Activated CD4-positive, alpha-beta T cell treated with anti-CD3 and anti-CD28 coated beads for 36 hours (primary cell): ENCODE measurements at regions of chr3 and their contacts with region 1.

Region 1: GRCh38 chr3:120587332-120587975 is 8.7 kb upstream of the NDUFB4 start:
- DNase-seq: no peak
- ATAC-seq: no peak
- H3K4me3 Mint-ChIP-seq: no peak overlapping the region
- H3K27ac Mint-ChIP-seq: no peak overlapping the region
- H3K4me1 Mint-ChIP-seq: no peaks in the 10 kb centered on the region
- H3K27me3 Mint-ChIP-seq: peaks cover 2% of the 10 kb centered on the region

Region 2: DNA sequence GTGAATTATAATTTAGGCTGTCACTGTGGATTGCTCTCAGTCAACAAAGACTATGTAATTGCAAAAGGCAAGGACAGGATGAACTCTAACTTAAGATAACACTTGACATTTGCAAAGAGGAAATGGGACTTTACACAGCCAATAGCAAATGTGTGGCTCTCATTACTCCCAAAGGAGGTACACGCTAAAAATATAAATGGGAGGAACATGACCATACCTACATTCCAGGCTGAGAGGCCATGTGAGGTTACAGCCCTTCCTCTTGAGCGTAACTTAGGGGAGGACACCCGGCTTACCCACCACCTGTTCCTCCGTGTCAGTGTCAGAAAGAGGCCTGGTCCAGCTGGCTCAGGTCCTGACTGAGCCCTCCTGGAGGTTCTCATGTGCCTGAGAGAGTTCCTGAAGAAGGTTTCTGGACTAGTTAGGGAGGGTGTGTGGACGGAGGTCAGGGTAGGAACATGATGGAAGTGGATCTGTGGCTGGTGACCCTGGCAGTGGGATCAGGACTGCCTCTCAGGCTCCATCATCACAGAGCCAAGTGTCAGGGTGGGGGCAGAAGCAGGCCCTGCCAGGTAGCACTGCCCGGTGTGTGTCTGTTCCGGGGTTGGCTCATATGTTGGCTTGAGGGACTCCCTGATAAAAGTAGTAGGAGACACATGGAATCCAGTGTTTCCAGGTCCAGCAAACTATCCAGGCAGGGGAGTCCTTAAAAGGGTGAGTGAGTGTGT is 935.0 kb before region 1 on chr3:
- CTCF ChIA-PET with region 1: no interaction called
- POLR2A ChIA-PET with region 1: no interaction called
- intact Hi-C with region 1: no loop called
- DNase-seq: no peak
- ATAC-seq: no peak
- H3K4me3 Mint-ChIP-seq: no peak overlapping the region
- H3K27ac Mint-ChIP-seq: no peak overlapping the region
- H3K4me1 Mint-ChIP-seq: no peaks in the 10 kb centered on the region
- H3K27me3 Mint-ChIP-seq: no peaks in the 10 kb centered on the region

Region 3: DNA sequence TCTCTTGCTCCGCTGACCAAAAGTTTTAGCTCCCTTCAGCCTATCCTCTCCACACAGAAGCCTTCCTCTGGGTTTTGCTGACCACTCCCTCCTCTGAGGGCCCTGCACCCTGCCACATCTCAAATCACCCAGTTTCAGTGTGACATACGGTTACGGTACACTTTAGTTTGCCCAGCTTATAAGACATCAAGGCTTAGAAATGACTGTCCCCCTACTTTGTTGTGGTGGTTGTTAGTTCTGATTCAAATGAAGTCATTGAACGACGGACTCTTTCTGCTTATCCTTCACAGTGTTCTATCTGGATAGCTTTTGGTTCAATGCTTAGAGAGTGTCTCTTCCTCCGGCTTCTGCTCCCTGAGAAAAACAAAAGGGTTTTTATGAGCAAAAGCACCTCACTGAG is 59.3 kb before region 1 on chr3:
- CTCF ChIA-PET with region 1: no interaction called
- POLR2A ChIA-PET with region 1: no interaction called
- intact Hi-C with region 1: no loop called
- DNase-seq: no peak
- ATAC-seq: peak; percentile 51
- H3K4me3 Mint-ChIP-seq: no peak overlapping the region
- H3K27ac Mint-ChIP-seq: no peak overlapping the region
- H3K4me1 Mint-ChIP-seq: peaks cover 5% of the 10 kb centered on the region
- H3K27me3 Mint-ChIP-seq: peaks cover 23% of the 10 kb centered on the region

Region 4: DNA sequence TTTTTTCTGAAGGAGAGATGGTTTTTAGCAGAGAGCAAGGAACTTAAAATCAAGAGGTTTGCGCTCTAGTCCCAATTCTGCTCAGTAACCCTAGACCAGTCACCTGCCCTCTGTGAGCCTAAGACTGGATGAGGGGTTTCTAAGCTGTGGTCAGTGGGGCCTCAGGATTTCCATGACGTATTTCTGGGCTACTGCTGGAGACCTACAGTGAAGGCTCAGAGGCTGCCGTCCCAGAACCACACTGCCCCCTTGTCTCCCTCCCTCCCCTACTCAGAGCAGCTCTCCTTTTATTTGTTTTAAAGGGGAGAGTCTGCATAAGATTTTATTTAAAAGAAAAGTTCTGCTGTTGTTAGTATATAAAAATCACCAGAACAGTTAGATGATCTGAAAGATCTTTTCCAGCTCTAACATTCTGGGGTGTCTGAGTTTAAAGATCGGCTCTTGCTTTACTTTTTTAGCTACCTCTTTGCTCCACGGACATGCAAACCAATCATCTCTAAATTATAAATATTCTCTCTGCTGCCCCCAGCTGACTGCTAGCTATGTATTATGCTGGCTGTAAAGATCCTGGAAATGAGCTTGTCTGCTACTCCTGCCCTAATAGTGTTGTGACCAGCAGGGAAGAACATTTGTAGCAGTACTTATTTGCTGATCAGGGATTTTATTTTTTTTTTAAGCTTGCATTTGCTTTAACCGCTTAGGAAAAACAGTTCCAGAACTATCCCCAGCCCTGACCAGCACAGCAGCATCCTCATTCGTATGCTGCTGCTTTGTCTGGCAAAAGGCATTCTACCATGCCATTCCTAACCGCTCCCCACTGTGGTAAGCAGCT is 19.9 kb before region 1 on chr3:
- CTCF ChIA-PET with region 1: no interaction called
- POLR2A ChIA-PET with region 1: no interaction called
- intact Hi-C with region 1: loop called in 1 of 2 experiments (anchors 1 kb)
- DNase-seq: no peak
- ATAC-seq: peak; percentile 33
- H3K4me3 Mint-ChIP-seq: no peak overlapping the region
- H3K27ac Mint-ChIP-seq: no peak overlapping the region
- H3K4me1 Mint-ChIP-seq: peaks cover 3% of the 10 kb centered on the region
- H3K27me3 Mint-ChIP-seq: peaks cover 3% of the 10 kb centered on the region

Region 5: GRCh38 chr3:121681792-121682191 is 1094.3 kb after region 1 on chr3:
- CTCF ChIA-PET with region 1: no interaction called
- POLR2A ChIA-PET with region 1: no interaction called
- intact Hi-C with region 1: no loop called
- DNase-seq: peak; percentile 13
- ATAC-seq: peak; percentile 84
- H3K4me3 Mint-ChIP-seq: no peak overlapping the region
- H3K27ac Mint-ChIP-seq: no peak overlapping the region
- H3K4me1 Mint-ChIP-seq: no peaks in the 10 kb centered on the region
- H3K27me3 Mint-ChIP-seq: no peaks in the 10 kb centered on the region